Calu3 (cell line): ENCODE measurements at regions of chr5 and their contacts with region 1.

Region 1: GRCh38 chr5:116613445-116613844 is 38.8 kb upstream of the SEMA6A start:
- DNase-seq: no peak
- H3K4me3 Mint-ChIP-seq: peak overlapping the region; percentile 52
- H3K27ac Mint-ChIP-seq: peak overlapping the region; percentile 96
- H3K4me1 Mint-ChIP-seq: peaks cover 42% of the 10 kb centered on the region
- H3K27me3 Mint-ChIP-seq: no peaks in the 10 kb centered on the region
- CTCF ChIP-seq: no peak

Region 2: GRCh38 chr5:116652196-116652729 is 38.8 kb after region 1 on chr5:
- CTCF ChIA-PET with region 1: no interaction called
- intact Hi-C with region 1: loop called (anchors 1 kb)
- DNase-seq: peak; percentile 79
- H3K4me3 Mint-ChIP-seq: peak overlapping the region; percentile 46
- H3K27ac Mint-ChIP-seq: peak overlapping the region; percentile 73
- H3K4me1 Mint-ChIP-seq: peaks cover 22% of the 10 kb centered on the region
- H3K27me3 Mint-ChIP-seq: no peaks in the 10 kb centered on the region
- CTCF ChIP-seq: no peak